HepG2 (cell line): ENCODE measurements at regions of chrX and their contacts with region 1.

Region 1: DNA sequence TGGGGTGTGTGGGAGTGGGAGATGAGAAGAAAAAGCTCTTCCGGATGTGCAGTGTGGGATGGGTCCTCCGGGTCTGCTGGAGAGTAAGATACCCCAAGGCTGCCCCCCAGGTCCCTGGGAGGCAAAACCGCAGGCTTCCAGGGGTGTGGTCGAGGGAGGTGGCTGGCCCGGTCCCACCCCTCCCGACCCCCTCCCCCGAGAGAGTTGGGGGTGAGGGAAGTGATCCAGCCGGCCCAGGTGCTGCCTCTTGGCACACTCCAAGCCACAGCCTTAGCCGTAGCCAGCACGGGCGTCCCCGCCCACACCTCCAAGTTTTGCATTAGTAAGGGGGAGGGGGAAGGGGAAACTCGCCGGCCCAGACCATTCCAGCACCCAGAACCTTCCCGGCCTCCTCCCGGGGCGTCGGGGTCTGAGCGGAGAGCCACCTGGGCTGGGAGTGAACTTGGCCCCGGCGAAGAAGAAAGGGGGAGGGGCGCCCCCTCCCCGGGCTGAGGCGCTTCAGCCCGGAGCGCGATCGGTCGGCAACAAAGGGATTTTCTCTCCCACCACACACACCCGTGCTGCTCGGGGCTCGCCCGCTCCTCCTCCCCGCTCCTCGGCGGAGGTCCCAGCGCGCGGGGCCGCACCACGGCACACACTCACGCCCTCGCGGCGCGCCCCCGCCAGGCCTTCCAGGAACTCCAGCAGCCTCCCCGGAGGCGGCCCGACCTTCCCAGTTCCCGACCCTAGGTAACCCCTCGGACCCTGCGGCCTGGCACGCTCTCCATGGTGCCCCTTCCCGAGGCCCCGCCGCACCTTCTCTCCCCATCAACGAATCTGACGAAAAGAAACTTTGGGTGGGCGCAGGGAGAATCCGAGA is 14.4 kb downstream of the BCOR start:
- DNase-seq: no peak
- ATAC-seq: peak; percentile 58
- H3K4me3 ChIP-seq: peak overlapping the region; percentile 50 to 67 (median 52); a peak in 5 of 6 replicates
- H3K27ac ChIP-seq: peak overlapping the region; percentile 76
- H3K4me1 ChIP-seq: peaks cover 72% of the 10 kb centered on the region
- H3K27me3 ChIP-seq: no peaks in the 10 kb centered on the region
- CTCF ChIP-seq: no peak
- EP300 ChIP-seq: no peak
- POLR2A ChIP-seq: no peak
- RAD21 ChIP-seq: no peak

Region 2: DNA sequence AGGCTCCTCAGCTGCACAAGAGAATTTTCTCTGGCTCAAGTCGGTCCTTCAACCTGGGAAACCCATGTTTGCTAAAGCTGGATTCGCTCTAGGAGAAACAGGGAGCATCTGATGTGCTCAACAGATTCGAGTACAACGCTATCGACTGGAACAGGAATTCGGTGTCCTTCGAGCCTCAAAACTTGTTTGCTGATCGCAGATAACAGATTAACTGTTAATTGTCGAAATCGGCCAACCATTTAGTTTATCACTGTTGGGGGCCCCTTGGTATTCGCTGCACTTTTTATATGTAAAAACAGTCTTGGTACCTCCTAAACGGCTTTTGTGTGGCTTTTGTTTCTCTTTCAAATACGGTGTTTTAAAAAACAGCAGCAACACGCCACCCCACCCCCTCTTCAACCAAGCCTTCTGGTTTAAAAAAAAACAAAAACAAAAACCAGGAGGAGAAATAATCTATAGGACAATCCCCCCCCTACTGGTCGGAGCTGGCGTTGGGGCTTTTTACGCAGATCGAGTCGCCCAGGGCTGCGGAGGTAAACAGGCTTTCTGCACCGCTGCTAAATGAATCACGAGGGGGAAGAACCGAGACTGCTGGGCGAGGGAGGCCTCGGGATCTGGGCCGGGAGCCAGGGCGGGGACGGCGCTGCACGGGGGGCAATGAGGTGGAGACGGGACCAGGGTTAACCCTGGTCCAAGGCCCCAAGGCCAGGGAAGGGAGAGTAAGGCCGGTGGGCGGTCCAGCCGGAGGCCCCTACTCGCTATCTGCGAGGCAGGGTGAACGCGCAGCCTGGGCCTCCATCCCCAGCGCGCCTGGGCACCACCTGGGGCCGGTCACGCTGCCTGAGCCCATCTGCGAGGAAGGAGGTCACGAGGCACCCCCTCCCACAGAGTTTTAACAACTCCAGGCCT is 86.1 kb after region 1 on chrX:
- CTCF ChIA-PET with region 1: no interaction called
- POLR2A ChIA-PET with region 1: no interaction called
- in situ Hi-C with region 1: no loop called
- intact Hi-C with region 1: loop called (anchors 5 kb)
- DNase-seq: peak; percentile 70
- ATAC-seq: peak; percentile 59
- H3K4me3 ChIP-seq: peak overlapping the region; percentile 12 to 30 (median 28); a peak in 5 of 6 replicates
- H3K27ac ChIP-seq: peak overlapping the region; percentile 67
- H3K4me1 ChIP-seq: peaks cover 92% of the 10 kb centered on the region
- H3K27me3 ChIP-seq: no peaks in the 10 kb centered on the region
- CTCF ChIP-seq: peak; percentile 58
- EP300 ChIP-seq: no peak; a peak in 1 of 4 replicates
- POLR2A ChIP-seq: no peak
- RAD21 ChIP-seq: peak; percentile 38; the same call in 1 of the 2 replicates